MCF 10A (cell line): ENCODE measurements at regions of chr1 and their contacts with region 1.

Region 1: DNA sequence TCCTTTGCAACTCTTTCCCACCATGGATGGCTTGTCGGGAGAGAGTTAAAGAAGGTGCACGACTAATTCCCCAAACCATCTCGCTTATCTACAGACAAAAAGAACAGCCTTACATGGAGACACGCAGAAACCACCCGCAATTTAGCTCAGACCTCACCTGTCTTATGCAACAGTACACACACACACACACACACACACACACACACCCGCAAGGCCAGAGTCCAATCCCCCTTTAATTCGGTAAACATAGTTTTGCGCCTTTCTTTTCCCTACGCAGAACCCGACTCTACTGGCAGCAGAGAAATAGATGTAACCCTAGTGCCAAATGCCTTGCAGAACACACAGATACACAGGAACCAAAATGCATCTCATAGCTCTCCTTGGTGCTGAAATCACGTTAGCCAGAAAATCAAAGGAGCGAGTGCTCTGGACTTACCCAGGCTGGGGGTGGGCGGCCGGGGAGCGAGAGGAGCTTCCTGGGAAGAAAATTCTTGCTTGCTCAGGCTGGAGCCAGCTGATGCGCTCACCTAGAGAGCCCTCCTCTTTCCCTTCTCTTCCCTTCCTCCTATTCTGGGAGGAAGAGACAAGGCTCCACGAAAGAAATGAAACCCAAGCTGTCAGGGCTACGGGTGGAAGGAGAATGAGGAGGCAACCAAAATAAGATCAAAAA is 470 bp downstream of the TNR start:
- DNase-seq: peak; percentile 62
- H3K4me3 Mint-ChIP-seq: no peak overlapping the region
- H3K27ac Mint-ChIP-seq: no peak overlapping the region
- H3K4me1 Mint-ChIP-seq: peaks cover 6% of the 10 kb centered on the region
- H3K27me3 Mint-ChIP-seq: peaks cover 56% of the 10 kb centered on the region
- CTCF ChIP-seq: no peak

Region 2: DNA sequence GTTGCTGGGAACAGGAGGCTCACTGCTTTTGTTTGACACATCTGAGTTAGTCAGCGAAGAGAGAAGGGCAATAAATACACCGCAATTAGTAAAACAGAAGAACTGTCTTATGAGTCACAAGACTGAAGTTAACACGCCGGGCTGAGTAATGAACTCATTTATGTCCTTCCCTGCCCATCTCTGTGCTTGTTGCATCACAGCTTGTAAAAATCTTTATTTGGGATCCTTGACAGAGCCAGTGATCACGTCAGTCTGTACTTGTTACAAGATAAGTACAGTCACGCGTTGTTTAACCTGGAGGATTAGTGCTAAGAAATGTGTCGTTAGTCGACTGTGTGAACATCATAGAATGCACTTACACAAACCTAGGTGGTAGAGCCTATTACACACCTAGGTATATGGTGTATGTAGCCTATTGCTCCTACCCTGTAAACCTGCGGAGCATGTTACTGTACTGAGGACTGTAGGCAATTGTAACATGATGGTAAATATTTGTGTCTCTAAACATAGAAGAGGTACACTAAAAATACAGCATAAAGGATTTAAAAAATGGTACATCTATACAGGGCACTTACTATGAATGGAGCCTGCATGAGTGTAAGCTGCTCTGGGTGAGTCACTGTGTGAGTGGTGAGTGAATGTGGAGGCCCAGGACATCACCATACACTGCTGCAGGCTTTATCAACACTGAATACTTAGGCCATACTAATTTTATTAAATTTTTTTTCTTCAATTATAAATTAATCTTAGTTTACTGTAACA is 271.7 kb before region 1 on chr1:
- CTCF ChIA-PET with region 1: interaction called, 13 read pairs
- POLR2A ChIA-PET with region 1: no interaction called
- intact Hi-C with region 1: no loop called
- DNase-seq: peak; percentile 95
- H3K4me3 Mint-ChIP-seq: no peak overlapping the region
- H3K27ac Mint-ChIP-seq: peak overlapping the region; percentile 65
- H3K4me1 Mint-ChIP-seq: peaks cover 30% of the 10 kb centered on the region
- H3K27me3 Mint-ChIP-seq: peaks cover 72% of the 10 kb centered on the region
- CTCF ChIP-seq: no peak

Region 3: DNA sequence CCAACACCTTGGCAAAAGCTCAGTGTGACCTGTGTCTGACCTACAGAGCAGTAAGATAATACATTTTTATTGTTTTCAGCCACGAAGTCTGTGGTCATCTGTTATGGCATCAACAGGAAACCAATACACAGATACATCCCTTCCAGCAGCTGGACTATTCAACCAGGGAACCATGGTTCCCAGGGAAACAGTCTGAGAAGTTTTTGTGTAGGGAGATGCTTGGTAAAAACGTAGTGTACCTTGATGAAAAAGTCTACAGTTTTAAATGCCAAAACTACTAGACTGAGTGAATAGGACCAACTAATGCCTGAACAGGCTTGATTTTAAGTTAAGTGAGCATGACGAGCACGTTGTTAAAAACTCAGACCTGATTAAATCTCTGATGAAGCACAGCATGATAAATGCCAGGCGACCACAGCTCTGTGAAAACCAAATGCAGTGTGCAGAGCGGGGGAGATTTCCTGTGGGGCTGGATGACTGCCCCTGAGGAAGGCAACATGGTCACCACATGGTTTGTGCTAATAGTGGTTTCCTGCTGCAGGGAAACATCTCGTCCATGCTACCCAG is 228.5 kb before region 1 on chr1:
- CTCF ChIA-PET with region 1: interaction called, 10 read pairs
- POLR2A ChIA-PET with region 1: no interaction called
- intact Hi-C with region 1: no loop called
- DNase-seq: no peak
- H3K4me3 Mint-ChIP-seq: no peak overlapping the region
- H3K27ac Mint-ChIP-seq: no peak overlapping the region
- H3K4me1 Mint-ChIP-seq: peaks cover 9% of the 10 kb centered on the region
- H3K27me3 Mint-ChIP-seq: peaks cover 54% of the 10 kb centered on the region
- CTCF ChIP-seq: no peak

Region 4: DNA sequence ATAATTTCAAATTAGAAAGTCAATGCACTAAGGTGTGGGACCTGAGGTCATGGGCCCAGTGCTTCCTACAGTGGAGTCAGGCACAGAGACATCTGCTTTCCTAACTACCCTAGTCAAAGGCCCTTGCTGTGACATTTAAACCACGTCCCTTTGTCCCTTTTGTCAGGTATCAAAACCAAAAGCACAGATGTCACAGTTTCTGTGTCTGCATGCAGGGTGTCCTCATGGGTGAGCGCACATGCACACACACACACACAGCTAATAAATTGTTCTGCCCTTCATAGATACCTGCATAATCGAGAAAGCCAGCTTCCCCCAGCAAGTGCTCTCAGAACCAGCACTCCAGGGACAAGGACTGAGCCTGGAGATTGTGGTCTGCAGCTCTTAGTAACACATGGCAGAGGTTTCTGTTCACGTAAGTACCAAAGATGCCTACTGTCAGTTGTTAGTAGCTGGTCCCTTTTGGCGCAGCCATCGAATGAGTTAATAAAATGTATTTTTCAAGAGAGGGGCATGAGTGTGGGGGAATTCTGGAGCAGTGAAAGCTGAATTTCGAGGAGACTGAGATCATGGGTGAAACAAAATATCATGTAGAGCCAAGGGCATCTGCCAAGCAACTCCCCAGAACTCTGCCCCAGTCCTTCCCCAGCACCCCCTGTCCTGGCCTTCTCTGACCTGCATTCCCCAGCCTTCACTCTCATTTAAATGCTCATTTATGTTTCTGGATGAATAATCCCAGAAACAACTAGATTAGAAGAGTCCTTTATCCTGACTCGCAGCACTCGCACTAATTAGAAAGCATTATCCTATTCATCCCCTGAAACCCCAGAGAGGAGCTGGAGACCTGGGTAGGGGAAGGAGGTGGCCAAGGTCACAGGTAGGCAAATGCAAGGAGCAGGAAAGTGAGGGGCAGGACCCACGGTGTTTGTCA is 25.1 kb before region 1 on chr1:
- CTCF ChIA-PET with region 1: interaction called, 109 read pairs
- POLR2A ChIA-PET with region 1: interaction called, 3 read pairs
- intact Hi-C with region 1: no loop called
- DNase-seq: no peak
- H3K4me3 Mint-ChIP-seq: no peak overlapping the region
- H3K27ac Mint-ChIP-seq: no peak overlapping the region
- H3K4me1 Mint-ChIP-seq: no peaks in the 10 kb centered on the region
- H3K27me3 Mint-ChIP-seq: peaks cover 59% of the 10 kb centered on the region
- CTCF ChIP-seq: no peak

Region 5: DNA sequence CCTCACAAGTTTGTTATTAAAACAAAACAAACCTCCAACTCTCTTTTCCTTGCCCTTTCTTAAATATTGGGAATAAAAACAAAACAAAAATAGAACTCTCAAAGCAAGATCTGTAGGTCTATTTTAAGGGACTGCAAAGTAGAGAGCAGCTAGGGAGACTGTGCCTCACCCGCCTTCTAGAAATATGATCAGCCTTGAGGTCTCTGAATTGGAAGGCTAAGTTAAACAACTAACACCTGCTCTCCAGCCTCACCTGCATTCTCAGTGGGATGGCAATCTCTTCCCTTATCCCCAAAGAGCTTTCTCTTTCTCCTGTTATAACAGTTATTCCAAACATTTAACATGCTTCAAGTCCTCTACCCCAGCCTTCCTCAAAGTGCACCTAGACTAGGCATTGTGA is 76.0 kb after region 1 on chr1:
- CTCF ChIA-PET with region 1: interaction called, 12 read pairs
- POLR2A ChIA-PET with region 1: no interaction called
- intact Hi-C with region 1: no loop called
- DNase-seq: no peak
- H3K4me3 Mint-ChIP-seq: no peak overlapping the region
- H3K27ac Mint-ChIP-seq: no peak overlapping the region
- H3K4me1 Mint-ChIP-seq: peaks cover 21% of the 10 kb centered on the region
- H3K27me3 Mint-ChIP-seq: no peaks in the 10 kb centered on the region
- CTCF ChIP-seq: no peak

Region 6: GRCh38 chr1:175968486-175969172 is 225.7 kb after region 1 on chr1:
- CTCF ChIA-PET with region 1: no interaction called
- POLR2A ChIA-PET with region 1: no interaction called
- intact Hi-C with region 1: no loop called
- DNase-seq: no peak
- H3K4me3 Mint-ChIP-seq: no peak overlapping the region
- H3K27ac Mint-ChIP-seq: no peak overlapping the region
- H3K4me1 Mint-ChIP-seq: no peaks in the 10 kb centered on the region
- H3K27me3 Mint-ChIP-seq: no peaks in the 10 kb centered on the region
- CTCF ChIP-seq: no peak